A549 (cell line): ENCODE measurements at regions of chr10 and their contacts with region 1.

Region 1: DNA sequence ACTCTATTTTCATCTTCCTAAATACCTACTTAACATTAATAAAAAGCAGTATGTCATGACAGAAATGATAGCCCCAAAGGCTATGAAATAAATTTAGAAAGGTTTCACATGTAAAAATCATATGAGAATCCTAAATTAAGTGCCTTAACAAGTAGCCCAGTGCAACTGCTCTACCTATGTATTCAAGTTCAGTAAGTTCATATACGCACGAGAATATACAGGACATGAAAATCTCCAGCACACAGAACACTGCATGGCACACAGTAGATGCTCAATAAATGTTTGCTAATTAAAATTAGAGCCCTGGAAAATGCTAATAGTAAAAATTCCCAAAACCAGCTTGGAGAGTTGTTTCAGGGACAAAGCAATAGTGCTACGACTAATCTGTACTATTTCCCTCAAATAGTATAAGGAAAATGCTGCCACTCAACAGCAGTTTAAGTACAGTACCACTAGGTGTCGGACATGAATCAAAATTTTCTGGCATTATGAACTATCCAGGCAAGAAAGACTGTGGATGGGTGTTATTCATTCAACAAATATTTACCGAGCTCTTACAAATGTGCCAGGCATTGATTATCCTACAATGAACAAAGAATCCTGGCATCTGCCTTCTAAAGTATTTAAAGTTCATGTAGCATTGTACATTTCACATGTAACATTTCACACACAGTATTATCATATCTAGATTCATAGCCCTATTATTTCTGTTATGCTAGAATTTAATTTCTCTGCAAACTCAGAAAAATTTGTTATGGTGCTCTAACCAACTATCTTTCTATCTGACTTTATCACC is 80.9 kb downstream of the ARHGAP21 start:
- DNase-seq: peak; percentile 62 to 82
- ATAC-seq: peak; percentile 98
- H3K4me3 ChIP-seq: no peak overlapping the region
- H3K27ac ChIP-seq: peak overlapping the region in 1 of 2 experiments; percentile 34; a peak in 3 of 6 replicates
- H3K4me1 ChIP-seq: peaks cover 24% of the 10 kb centered on the region
- CTCF ChIP-seq: peak; percentile 95
- EP300 ChIP-seq: no peak
- POLR2A ChIP-seq: no peak
- RAD21 ChIP-seq: peak; percentile 94 to 97

Region 2: GRCh38 chr10:24496906-24497305 is 145.9 kb before region 1 on chr10:
- CTCF ChIA-PET with region 1: no interaction called
- POLR2A ChIA-PET with region 1: no interaction called
- DNase-seq: no peak
- ATAC-seq: no peak
- H3K4me3 ChIP-seq: no peak overlapping the region
- H3K27ac ChIP-seq: no peak overlapping the region
- H3K4me1 ChIP-seq: no peaks in the 10 kb centered on the region
- CTCF ChIP-seq: no peak
- EP300 ChIP-seq: no peak
- POLR2A ChIP-seq: no peak
- RAD21 ChIP-seq: no peak

Region 3: DNA sequence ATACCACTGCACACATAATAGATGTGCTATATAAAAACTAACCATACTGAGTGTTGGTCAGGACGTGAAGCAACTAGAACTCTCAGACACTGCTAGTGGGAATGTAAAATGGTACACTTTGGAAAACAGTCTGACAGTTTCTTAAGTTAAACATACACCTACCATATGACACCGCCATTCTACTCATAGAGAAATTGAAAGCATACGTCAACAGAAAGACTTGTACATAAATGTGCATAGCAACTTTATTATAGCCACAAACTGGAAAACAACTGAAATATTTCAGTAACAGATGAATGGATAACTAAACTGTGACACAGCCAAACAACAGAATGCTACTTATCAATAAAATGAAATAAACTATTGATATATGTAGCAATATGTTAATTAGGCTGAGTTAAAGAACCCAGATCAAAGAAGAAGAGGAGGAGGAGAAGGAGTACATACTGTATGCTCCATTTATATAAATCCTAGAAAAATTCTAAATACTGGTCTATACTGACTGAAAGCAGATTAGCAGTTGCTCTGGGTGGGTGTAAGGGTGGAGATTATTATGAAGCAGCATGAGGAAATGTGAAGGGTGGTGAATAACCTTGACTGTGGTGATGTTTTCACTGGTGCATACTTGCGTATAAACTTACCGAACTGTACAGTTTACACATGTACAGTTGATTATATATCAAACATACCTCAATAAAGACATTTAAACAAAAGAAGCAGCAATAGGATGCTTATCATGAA is 32.2 kb after region 1 on chr10:
- CTCF ChIA-PET with region 1: no interaction called
- POLR2A ChIA-PET with region 1: no interaction called
- DNase-seq: no peak
- ATAC-seq: no peak
- H3K4me3 ChIP-seq: no peak overlapping the region
- H3K27ac ChIP-seq: no peak overlapping the region
- H3K4me1 ChIP-seq: peaks cover 3% of the 10 kb centered on the region; the same call in 1 of the 3 replicates
- CTCF ChIP-seq: no peak
- EP300 ChIP-seq: no peak
- POLR2A ChIP-seq: no peak
- RAD21 ChIP-seq: no peak

Region 4: DNA sequence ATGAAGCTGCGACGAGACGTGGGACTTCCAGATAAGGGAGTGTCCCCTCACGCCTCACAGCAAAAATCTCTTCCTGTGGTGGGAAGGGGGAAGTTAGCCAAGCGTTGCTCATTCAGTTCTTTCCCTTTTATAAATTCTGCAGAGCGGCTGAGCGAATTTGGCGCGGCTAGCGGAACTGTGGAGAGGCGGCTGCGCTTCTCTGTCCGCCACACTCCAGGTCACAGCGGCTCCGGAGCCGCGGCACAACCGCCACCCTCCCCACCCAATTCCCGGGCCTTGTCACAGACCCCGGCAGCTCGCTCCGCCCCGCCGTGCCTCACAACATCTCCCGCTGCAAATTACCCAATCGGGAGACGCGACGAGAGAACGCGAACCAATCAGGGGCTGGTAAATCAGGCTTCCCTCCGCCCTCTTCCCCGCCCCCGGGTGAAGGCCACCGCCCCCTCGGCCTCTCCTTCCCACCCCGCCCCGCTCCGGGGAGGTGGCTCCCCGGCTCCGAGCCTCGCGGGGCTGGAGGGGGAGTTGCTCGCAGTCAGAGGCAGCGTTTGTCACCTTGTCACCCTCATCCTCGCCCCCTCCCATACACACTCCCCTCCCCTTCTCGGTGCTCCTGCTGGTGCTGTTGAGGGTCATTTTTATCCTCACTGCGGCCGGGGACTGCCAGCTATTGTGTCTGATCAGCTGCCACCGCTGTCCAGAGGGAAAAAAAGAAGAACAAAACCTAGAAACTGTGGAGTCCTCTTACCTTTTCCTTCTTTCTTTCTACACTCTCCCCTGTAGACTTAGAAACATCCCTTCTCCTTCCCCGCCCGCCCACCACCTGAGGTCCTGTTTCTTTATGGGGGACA is 81.8 kb after region 1 on chr10:
- CTCF ChIA-PET with region 1: interaction called, 12 read pairs
- POLR2A ChIA-PET with region 1: interaction called, 3 read pairs
- DNase-seq: peak; percentile 97
- ATAC-seq: peak; percentile 77 to 90
- H3K4me3 ChIP-seq: peak overlapping the region; percentile 86
- H3K27ac ChIP-seq: peak overlapping the region; percentile 98 to 99
- H3K4me1 ChIP-seq: peaks cover 10% of the 10 kb centered on the region; the same call in 2 of the 3 replicates
- CTCF ChIP-seq: no peak
- EP300 ChIP-seq: no peak
- POLR2A ChIP-seq: peak; percentile 76
- RAD21 ChIP-seq: no peak; a peak in 2 of 5 replicates

Region 5: GRCh38 chr10:24944512-24945255 is 301.9 kb after region 1 on chr10:
- CTCF ChIA-PET with region 1: interaction called, 13 read pairs
- POLR2A ChIA-PET with region 1: no interaction called
- DNase-seq: peak; percentile 62 to 79
- ATAC-seq: peak; percentile 95
- H3K4me3 ChIP-seq: no peak overlapping the region
- H3K27ac ChIP-seq: peak overlapping the region; percentile 29 to 62; a peak in 4 of 6 replicates
- H3K4me1 ChIP-seq: peaks cover 22% of the 10 kb centered on the region
- CTCF ChIP-seq: peak; percentile 12; the same call in 1 of the 3 replicates
- EP300 ChIP-seq: no peak
- POLR2A ChIP-seq: no peak
- RAD21 ChIP-seq: peak; percentile 50 to 67

Region 6: GRCh38 chr10:24982319-24983112 is 339.7 kb after region 1 on chr10:
- CTCF ChIA-PET with region 1: interaction called, 25 read pairs
- POLR2A ChIA-PET with region 1: no interaction called
- DNase-seq: no peak
- ATAC-seq: no peak
- H3K4me3 ChIP-seq: no peak overlapping the region
- H3K27ac ChIP-seq: no peak overlapping the region
- H3K4me1 ChIP-seq: peaks cover 8% of the 10 kb centered on the region; the same call in 1 of the 3 replicates
- CTCF ChIP-seq: no peak
- EP300 ChIP-seq: no peak
- POLR2A ChIP-seq: no peak
- RAD21 ChIP-seq: no peak

Region 7: DNA sequence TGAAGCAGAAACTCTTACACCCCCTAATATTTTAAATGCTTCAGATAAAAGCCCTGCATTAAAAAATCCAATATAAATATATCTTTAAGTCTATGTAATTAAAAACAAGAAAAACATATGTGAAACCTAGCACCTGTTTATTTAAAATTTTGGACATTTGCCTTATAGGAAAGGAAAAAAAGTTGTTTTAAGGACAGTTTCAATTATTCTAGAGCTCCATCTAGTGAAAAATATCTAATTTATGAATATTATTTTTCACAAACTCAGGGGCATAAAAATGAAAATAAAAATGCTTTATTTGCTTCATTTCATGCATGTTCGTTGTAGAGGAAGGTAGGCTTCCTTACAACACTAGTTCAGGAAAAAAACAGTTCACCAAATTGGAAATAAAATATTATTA is 347.0 kb after region 1 on chr10:
- CTCF ChIA-PET with region 1: interaction called, 25 read pairs
- POLR2A ChIA-PET with region 1: no interaction called
- DNase-seq: no peak
- ATAC-seq: no peak
- H3K4me3 ChIP-seq: no peak overlapping the region
- H3K27ac ChIP-seq: no peak overlapping the region
- H3K4me1 ChIP-seq: peaks cover 14% of the 10 kb centered on the region; the same call in 2 of the 3 replicates
- CTCF ChIP-seq: peak; percentile 61
- EP300 ChIP-seq: no peak
- POLR2A ChIP-seq: no peak
- RAD21 ChIP-seq: peak; percentile 72 to 88

Region 8: GRCh38 chr10:25682203-25682851 is 1039.5 kb after region 1 on chr10:
- CTCF ChIA-PET with region 1: no interaction called
- POLR2A ChIA-PET with region 1: no interaction called
- DNase-seq: peak; percentile 21 to 23
- ATAC-seq: peak; percentile 89 to 90
- H3K4me3 ChIP-seq: 0 out of 3 replicates have a peak overlapping the region, but pooled peaks have one; percentile 18
- H3K27ac ChIP-seq: 0 out of 6 replicates have a peak overlapping the region, but pooled peaks of 1 of the 2 experiments have one; percentile 16
- H3K4me1 ChIP-seq: no peaks in the 10 kb centered on the region
- CTCF ChIP-seq: peak; percentile 34
- EP300 ChIP-seq: no peak
- POLR2A ChIP-seq: no peak
- RAD21 ChIP-seq: peak; percentile 64 to 66